Left ventricle myocardium superior (tissue), 1 donor: ENCODE measurements at regions of chr17 and their contacts with region 1.

Region 1: GRCh38 chr17:33520426-33521330 is 227.6 kb upstream of the ASIC2 start:
- DNase-seq: peak; percentile 59
- ATAC-seq: peak; percentile 58

Region 2: DNA sequence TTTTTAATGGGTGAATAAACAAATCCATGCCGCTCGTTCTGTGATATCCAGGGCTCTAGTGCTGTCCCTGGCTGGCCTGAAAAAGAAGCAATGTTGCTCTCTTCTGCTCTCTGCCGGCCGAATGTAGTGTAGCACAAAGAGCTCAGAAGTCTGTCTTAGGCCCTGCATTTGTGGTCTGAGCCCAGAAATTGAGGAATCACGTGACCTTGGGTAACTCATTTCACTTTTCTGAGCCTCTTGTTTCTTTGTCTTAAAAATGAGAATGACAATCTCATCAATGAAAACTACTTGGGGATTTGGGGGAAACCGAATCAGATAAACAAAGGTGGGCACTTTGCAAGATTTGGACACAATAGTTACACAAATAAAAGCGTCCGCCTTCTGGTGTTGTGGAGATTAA is 154.0 kb after region 1 on chr17:
- intact Hi-C with region 1: loop called (anchors 10 kb)
- DNase-seq: peak; percentile 55
- ATAC-seq: peak; percentile 91

Region 3: GRCh38 chr17:33766721-33767120 is 246.0 kb after region 1 on chr17:
- intact Hi-C with region 1: no loop called
- DNase-seq: no peak
- ATAC-seq: no peak